ENCODE measurements at regions of chr3 and their contacts with region 1.

Region 1: GRCh38 chr3:45507820-45508317 is 86.7 kb upstream of the LIMD1 start:
- DNase-seq: no peak
- ATAC-seq: no peak

Region 2: DNA sequence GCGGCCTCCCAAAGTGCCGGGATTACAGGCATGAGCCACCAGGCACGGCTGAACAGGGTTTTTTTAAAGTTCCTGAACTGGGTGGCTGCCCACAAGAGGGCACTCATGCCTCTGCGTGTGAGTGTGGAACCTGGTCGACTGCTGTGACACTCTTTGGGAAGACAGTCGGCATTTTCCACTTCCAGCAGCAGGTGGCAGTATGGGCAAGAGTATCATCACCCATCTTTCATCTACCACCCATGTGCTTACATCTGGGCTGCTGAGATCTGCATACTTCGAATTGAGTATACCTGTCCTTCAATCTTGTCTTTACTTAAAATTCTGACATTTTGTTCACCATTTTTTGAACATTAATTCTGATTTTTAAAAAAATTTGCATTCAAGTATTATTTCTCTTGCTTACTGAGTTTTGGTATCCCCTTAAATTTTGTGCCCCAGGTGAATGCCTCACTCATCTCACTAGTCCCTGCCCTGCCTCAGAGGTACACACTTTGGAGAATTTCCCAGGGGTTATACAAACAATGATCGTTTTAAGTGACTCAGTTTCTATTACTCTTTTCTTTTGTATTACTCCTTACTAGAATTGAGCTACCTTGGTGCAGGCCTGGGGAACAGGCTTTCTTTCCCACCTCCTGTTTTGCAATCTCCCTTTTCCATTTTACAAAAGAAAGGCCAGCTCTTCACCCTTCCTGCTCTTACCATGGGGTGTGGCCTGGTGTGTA is 470.0 kb before region 1 on chr3:
- intact Hi-C with region 1: loop called in 1 of 2 experiments (anchors 10 kb)
- DNase-seq: peak; percentile 91 to 95
- ATAC-seq: peak; percentile 82

Region 3: GRCh38 chr3:45783667-45784066 is 275.8 kb after region 1 on chr3:
- intact Hi-C with region 1: no loop called
- DNase-seq: no peak
- ATAC-seq: peak; percentile 55